Natural killer cell (primary cell): ENCODE measurements at regions of chr9 and their contacts with region 1.

Region 1: GRCh38 chr9:89428901-89429890 is 68.7 kb downstream of the SEMA4D start:
- DNase-seq: peak in 1 of 2 donors; percentile 87
- ATAC-seq: peak in 1 of 3 donors; percentile 34
- H3K4me3 ChIP-seq: no peak overlapping the region
- H3K4me3 Mint-ChIP-seq: no peak overlapping the region
- H3K27ac ChIP-seq: no peak overlapping the region
- H3K27ac Mint-ChIP-seq: peak overlapping the region; percentile 84 to 92
- H3K4me1 ChIP-seq: peaks cover 97% of the 10 kb centered on the region
- H3K4me1 Mint-ChIP-seq: peaks cover 72 to 83% of the 10 kb centered on the region in 2 donors
- H3K27me3 ChIP-seq: no peaks in the 10 kb centered on the region
- H3K27me3 Mint-ChIP-seq: no peaks in the 10 kb centered on the region
- CTCF ChIP-seq: peak; percentile 28

Region 2: GRCh38 chr9:89375191-89375760 is 53.9 kb before region 1 on chr9:
- intact Hi-C with region 1: loop called (anchors 10 kb)
- DNase-seq: peak in 1 of 2 donors; percentile 37
- ATAC-seq: peak; percentile 45 to 66 (median 52)
- H3K4me3 ChIP-seq: no peak overlapping the region
- H3K4me3 Mint-ChIP-seq: peak overlapping the region; percentile 47
- H3K27ac ChIP-seq: peak overlapping the region; percentile 62
- H3K27ac Mint-ChIP-seq: peak overlapping the region in 1 of 2 donors; percentile 82
- H3K4me1 ChIP-seq: peaks cover 45% of the 10 kb centered on the region
- H3K4me1 Mint-ChIP-seq: peaks cover 47 to 53% of the 10 kb centered on the region in 2 donors
- H3K27me3 ChIP-seq: no peaks in the 10 kb centered on the region
- H3K27me3 Mint-ChIP-seq: no peaks in the 10 kb centered on the region
- CTCF ChIP-seq: no peak

Region 3: DNA sequence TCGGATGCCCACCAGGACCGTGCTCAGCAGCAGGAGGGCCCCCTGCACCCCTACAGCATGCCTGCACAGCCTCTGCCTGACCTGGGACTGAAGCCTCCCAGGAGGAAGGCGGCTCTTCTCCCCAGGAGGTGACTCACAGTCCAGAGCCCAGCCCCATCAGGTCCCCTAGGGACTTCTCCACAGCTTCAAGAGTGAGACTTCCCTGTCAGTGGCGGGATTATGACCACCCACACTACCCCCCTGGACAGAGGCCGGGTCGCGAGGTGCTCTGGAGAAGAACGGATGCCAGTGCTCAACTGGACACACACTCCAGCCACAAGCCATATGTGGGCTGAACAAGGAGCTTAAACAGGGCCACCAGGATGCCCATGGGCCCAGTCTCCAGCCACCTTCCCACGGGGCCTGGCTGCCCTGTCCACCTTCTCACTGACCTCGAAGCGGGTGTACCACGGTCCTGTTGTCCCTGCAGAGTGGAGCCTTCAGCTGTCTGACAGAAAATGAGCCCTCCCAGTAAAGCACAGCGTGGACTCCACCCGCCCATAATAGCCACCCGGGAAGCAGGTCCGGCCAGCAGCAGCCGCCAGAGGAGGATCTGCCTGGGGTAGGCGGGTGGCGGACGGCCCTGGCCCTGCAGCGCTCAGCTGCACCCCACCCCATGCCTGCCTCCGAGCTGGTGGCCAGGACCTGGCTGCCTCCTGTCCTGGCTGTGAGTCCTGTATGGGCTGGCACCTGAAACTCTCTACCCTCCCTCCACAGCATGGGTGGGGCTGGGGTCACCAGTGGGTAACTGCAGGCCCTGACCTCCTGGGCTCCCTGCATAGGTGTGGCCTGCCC is 14.0 kb after region 1 on chr9:
- intact Hi-C with region 1: loop called (anchors 2 kb)
- DNase-seq: no peak
- ATAC-seq: no peak
- H3K4me3 ChIP-seq: no peak overlapping the region
- H3K4me3 Mint-ChIP-seq: peak overlapping the region; percentile 92
- H3K27ac ChIP-seq: peak overlapping the region; percentile 37
- H3K27ac Mint-ChIP-seq: peak overlapping the region; percentile 93 to 97
- H3K4me1 ChIP-seq: peaks cover 95% of the 10 kb centered on the region
- H3K4me1 Mint-ChIP-seq: peaks cover 63 to 86% of the 10 kb centered on the region in 2 donors
- H3K27me3 ChIP-seq: no peaks in the 10 kb centered on the region
- H3K27me3 Mint-ChIP-seq: no peaks in the 10 kb centered on the region
- CTCF ChIP-seq: no peak

Region 4: GRCh38 chr9:89497978-89498851 is 69.0 kb after region 1 on chr9 and contains the start of gene SEMA4D:
- intact Hi-C with region 1: loop called (anchors 1 kb)
- DNase-seq: peak in 1 of 2 donors; percentile 82
- ATAC-seq: peak in 1 of 3 donors; percentile 7
- H3K4me3 ChIP-seq: peak within 1 kb of the TSS; percentile 87
- H3K4me3 Mint-ChIP-seq: peak within 1 kb of the TSS; percentile 93
- H3K27ac ChIP-seq: peak within 1 kb of the TSS; percentile 85
- H3K27ac Mint-ChIP-seq: peak within 1 kb of the TSS; percentile 91 to 98
- H3K4me1 ChIP-seq: peaks cover 90% of the 10 kb centered on the region
- H3K4me1 Mint-ChIP-seq: peaks cover 90 to 93% of the 10 kb centered on the region in 2 donors
- H3K27me3 ChIP-seq: no peaks in the 10 kb centered on the region
- H3K27me3 Mint-ChIP-seq: no peaks in the 10 kb centered on the region
- CTCF ChIP-seq: no peak
- total RNA-seq, gene SEMA4D: 354 to 448 (median 420) TPM

Region 5: GRCh38 chr9:89549031-89549644 is 119.9 kb after region 1 on chr9:
- intact Hi-C with region 1: loop called (anchors 2 kb)
- DNase-seq: peak; percentile 81 to 93
- ATAC-seq: peak; percentile 96 to 100 (median 100)
- H3K4me3 ChIP-seq: no peak overlapping the region
- H3K4me3 Mint-ChIP-seq: no peak overlapping the region
- H3K27ac ChIP-seq: no peak overlapping the region
- H3K27ac Mint-ChIP-seq: peak overlapping the region; percentile 8 to 70
- H3K4me1 ChIP-seq: peaks cover 11% of the 10 kb centered on the region
- H3K4me1 Mint-ChIP-seq: peaks cover 0 to 13% of the 10 kb centered on the region in 2 donors
- H3K27me3 ChIP-seq: no peaks in the 10 kb centered on the region
- H3K27me3 Mint-ChIP-seq: no peaks in the 10 kb centered on the region
- CTCF ChIP-seq: peak; percentile 97